PC-9 (cell line): ENCODE measurements at regions of chr17 and their contacts with region 1.

Region 1: DNA sequence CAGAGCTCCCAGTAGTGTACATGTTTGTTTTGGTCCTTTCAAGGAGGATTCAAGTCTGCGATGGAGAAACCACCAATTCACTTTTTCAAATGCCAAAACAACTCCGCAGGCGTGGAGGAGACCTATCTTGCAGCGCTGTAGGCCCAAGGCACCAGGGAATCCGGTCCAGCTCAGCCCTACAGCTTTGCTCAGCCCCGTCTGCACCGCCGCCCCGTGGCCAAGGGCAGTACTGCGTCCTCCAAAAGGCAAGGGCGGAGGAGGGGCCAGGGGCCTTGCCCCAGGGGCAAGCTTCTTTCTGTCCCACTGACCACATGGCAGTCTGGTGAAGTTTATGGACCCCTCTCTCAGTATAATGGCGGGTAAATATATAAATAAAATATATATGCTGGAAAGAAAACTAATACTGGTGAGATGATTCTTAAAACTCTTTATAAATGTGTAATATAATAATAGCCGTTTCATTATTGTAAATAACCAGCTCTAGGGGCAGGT is 709 bp upstream of the CD300LG start:
- DNase-seq: peak in 1 of 2 experiments; percentile 83
- H3K4me3 ChIP-seq: no peak overlapping the region
- H3K27ac ChIP-seq: no peak overlapping the region
- H3K4me1 ChIP-seq: peaks cover 15% of the 10 kb centered on the region
- H3K27me3 ChIP-seq: peaks cover 3% of the 10 kb centered on the region; the same call in 1 of the 2 replicates
- CTCF ChIP-seq: peak; percentile 98

Region 2: DNA sequence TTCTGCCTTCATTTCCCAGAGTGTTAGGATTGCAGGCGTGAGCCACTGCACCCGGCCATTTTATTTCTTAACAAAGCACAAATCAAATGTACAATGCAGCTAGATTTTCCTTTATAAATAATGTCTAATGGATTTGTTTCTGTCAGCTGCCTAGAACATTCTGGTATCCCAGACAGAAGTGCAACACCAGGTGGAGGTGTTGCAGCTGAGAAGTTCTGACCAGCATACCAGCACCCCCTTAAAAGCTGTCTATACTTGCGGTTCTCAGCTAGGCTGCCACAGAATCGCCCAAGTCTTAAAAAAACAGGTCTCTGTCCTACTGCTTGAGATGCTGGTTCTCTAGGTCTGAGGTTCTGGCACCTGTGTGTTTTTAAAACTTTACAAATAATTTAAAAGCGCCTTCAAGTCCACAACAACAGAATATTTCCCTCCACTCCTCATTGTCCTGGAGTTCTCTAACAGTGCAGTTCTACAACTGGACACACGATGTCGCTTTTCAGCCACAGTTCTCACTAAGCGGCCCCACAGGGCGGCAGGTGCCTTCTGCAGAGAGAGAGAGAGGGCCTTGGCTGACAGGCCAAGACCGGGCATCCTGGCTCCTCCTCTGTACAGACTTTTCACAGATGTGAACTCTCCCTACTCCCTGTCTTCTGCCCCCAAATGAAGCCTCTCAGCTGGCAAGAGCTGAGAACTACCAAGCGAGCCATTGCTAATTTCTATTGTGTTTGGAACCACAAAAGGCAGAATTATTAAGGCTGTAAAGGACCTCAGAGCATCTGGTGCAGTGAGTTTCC is 152.0 kb before region 1 on chr17:
- CTCF ChIA-PET with region 1: no interaction called
- POLR2A ChIA-PET with region 1: no interaction called
- intact Hi-C with region 1: loop called (anchors 5 kb)
- DNase-seq: peak; percentile 68 to 72
- H3K4me3 ChIP-seq: no peak overlapping the region
- H3K27ac ChIP-seq: no peak overlapping the region
- H3K4me1 ChIP-seq: no peaks in the 10 kb centered on the region
- H3K27me3 ChIP-seq: no peaks in the 10 kb centered on the region
- CTCF ChIP-seq: peak; percentile 97

Region 3: DNA sequence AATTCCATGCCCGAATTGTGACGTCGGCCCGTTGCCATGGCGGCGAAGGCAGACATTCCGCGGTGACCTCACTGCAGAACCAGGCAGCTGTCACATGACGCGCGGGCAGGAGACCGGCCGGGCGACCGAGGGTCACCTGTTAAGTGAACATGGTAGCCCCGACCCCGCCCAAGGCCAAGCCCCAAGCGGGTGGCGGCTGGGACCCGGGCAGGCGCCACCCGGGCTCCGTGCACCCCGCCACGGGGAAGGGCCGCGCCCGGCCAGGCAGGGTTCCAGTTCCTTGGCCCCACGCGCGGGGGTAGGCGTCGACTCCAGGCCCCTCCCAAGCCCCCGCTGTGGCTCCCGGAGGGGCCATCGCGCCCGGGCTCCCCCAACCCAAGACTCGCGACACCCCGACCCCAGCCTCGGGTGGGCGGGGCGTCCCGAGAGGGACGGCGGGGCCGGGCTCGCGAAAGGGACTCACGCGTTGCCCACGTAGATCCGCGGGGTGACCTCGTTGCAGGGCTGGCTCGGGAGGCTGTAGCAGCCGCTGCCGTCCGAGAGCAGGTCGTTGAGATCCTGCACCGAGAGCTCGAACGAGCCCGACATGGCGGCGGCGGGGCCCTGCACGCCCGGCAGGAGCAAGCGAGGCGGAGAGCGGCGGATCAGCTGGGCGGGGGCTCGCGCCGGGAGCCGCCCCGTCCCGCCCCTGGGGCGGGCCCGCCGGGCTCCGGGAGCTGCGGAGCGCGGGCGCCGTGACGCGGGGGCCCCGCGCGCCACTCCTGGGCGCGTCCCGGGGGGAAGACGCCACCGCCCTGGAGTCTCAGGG is 67.7 kb before region 1 on chr17 and contains the start of gene DUSP3:
- CTCF ChIA-PET with region 1: interaction called, 4 read pairs
- POLR2A ChIA-PET with region 1: no interaction called
- intact Hi-C with region 1: loop called (anchors 2 kb)
- DNase-seq: peak; percentile 89 to 94
- H3K4me3 ChIP-seq: peak within 1 kb of the TSS; percentile 81
- H3K27ac ChIP-seq: peak within 1 kb of the TSS; percentile 76
- H3K4me1 ChIP-seq: peaks cover 14% of the 10 kb centered on the region
- H3K27me3 ChIP-seq: peaks cover 20% of the 10 kb centered on the region; the same call in 1 of the 2 replicates
- CTCF ChIP-seq: no peak
- total RNA-seq, gene DUSP3: 37.2 and 38.4 TPM in 2 replicates

Region 4: GRCh38 chr17:43952717-43953666 is 106.7 kb after region 1 on chr17:
- CTCF ChIA-PET with region 1: no interaction called
- POLR2A ChIA-PET with region 1: interaction called, 10 read pairs
- intact Hi-C with region 1: no loop called
- DNase-seq: no peak
- H3K4me3 ChIP-seq: no peak overlapping the region
- H3K27ac ChIP-seq: no peak overlapping the region
- H3K4me1 ChIP-seq: no peaks in the 10 kb centered on the region
- H3K27me3 ChIP-seq: peaks cover 19% of the 10 kb centered on the region; the same call in 1 of the 2 replicates
- CTCF ChIP-seq: no peak

Region 5: GRCh38 chr17:44186307-44187130 is 340.3 kb after region 1 on chr17 and contains the start of gene TMUB2:
- CTCF ChIA-PET with region 1: no interaction called
- POLR2A ChIA-PET with region 1: interaction called, 31 read pairs
- intact Hi-C with region 1: no loop called
- DNase-seq: peak; percentile 95 to 99
- H3K4me3 ChIP-seq: peak within 1 kb of the TSS; percentile 94
- H3K27ac ChIP-seq: peak within 1 kb of the TSS; percentile 71
- H3K4me1 ChIP-seq: peaks cover 16% of the 10 kb centered on the region; the same call in 1 of the 2 replicates
- H3K27me3 ChIP-seq: no peaks in the 10 kb centered on the region
- CTCF ChIP-seq: no peak
- total RNA-seq, gene TMUB2: 39.2 and 45.5 TPM in 2 replicates